MCF 10A (cell line): ENCODE measurements at regions of chr6 and their contacts with region 1.

Region 1: DNA sequence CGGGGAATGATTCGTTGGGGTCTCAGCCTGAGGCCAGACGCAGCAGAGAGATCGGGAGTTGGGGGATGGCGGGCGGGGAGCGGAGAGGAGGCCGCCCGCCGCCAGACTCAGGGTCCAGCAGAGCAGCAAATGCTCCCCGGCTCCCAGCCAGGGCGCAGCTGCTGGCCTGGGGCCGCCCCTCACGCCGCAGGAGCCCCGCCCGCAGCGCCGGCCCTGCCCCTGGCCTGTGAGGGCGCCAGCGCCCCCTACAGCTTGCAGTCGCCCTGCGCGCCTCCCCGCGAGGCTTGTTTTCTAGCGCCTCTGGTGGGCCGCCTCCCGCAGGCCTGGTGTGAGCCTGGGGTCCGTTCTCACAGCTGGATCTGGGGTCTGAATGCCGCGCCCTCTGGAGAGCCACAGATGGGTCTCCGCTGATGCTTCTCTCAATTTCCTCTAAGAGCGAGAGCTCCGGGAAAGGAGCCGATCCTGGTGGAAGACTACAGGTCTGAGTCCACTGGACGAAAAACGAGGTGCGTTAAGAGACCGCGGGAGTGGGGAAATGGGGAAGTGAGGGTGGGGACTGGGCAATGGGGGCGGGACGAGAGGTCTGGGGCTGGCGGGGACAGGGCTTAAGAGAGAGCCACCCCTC is 29.9 kb downstream of the TRIM38 start:
- DNase-seq: peak; percentile 93
- H3K4me3 Mint-ChIP-seq: peak overlapping the region; percentile 86
- H3K27ac Mint-ChIP-seq: peak overlapping the region; percentile 96
- H3K4me1 Mint-ChIP-seq: peaks cover 7% of the 10 kb centered on the region
- H3K27me3 Mint-ChIP-seq: no peaks in the 10 kb centered on the region
- CTCF ChIP-seq: peak; percentile 94

Region 2: GRCh38 chr6:25874822-25875562 is 117.5 kb before region 1 on chr6:
- CTCF ChIA-PET with region 1: no interaction called
- POLR2A ChIA-PET with region 1: no interaction called
- intact Hi-C with region 1: no loop called
- DNase-seq: peak; percentile 27
- H3K4me3 Mint-ChIP-seq: no peak overlapping the region
- H3K27ac Mint-ChIP-seq: no peak overlapping the region
- H3K4me1 Mint-ChIP-seq: no peaks in the 10 kb centered on the region
- H3K27me3 Mint-ChIP-seq: no peaks in the 10 kb centered on the region
- CTCF ChIP-seq: no peak

Region 3: DNA sequence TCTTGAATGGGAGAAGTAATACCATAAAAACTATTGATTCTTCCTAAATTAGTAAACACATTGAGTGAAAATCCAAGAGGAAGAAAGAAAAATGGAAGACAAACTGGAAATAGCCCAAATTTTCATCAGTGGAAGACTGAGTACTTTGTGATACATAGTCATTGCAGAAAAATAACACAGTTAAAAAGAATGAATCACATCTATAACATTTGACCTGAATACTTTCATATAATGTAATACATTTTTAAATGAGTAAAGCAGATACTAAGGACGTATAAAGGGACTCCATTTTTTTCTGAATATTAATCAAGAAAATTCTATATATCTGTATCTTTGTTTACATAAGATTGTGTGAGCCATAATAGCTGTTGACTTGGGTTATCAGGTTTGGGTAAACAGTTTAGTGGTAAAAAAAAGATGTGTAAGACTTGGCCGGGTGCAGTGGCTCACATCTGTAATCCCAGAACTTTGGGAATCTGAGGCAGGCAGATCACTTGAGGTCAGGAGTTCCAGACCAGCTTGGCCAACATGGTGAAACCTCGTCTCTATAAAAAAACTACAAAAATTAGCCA is 57.7 kb before region 1 on chr6:
- CTCF ChIA-PET with region 1: no interaction called
- POLR2A ChIA-PET with region 1: no interaction called
- intact Hi-C with region 1: no loop called
- DNase-seq: no peak
- H3K4me3 Mint-ChIP-seq: no peak overlapping the region
- H3K27ac Mint-ChIP-seq: no peak overlapping the region
- H3K4me1 Mint-ChIP-seq: no peaks in the 10 kb centered on the region
- H3K27me3 Mint-ChIP-seq: no peaks in the 10 kb centered on the region
- CTCF ChIP-seq: no peak

Region 4: DNA sequence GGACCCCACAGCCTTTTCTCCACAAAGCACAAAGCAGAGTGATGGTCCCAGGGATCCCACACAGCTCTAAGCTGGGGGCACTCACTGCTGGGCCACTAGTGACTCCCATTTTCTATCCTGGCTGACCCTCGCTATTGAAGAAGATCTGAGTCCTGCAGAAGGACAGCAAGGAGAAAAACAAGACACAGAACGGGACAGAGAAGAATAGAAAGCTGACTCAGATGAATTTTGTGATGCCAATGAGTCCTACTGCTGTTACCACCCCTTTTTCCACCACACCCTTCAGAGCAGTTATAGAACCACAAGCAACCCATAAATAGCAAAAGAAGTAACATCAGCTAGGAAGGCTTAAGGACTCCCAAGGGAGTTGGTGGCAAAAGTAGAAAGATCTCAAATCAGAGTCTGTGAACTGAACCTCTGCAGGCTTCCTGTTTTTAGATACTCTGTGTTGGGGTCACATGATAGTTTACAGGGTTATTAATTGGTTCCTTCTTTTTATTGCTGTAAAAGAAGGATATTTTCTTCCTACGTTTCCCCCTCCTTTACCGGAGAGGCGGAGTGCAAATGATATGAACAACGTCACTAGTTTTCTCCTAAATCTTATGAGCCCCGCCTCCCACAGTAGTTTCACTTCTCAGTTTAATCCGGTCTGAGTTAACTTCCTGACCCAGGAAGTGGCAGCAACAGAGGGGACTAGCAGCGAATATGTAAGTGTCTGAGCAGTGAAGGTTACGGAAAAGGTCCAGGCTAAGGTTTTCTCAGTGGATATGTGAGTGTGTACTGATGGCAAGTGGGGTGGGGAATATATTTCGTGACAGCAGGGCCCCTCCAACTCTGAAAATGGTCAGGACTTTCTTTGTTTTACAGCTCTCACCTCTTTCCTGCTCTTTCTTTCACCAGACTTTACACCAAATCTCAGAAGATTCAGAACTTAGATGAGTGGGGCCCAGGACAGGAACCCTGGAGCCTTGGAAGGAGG is 30.1 kb before region 1 on chr6 and contains the start of gene TRIM38:
- CTCF ChIA-PET with region 1: interaction called, 19 read pairs
- POLR2A ChIA-PET with region 1: interaction called, 50 read pairs
- intact Hi-C with region 1: no loop called
- DNase-seq: peak; percentile 90
- H3K4me3 Mint-ChIP-seq: peak within 1 kb of the TSS; percentile 83
- H3K27ac Mint-ChIP-seq: peak within 1 kb of the TSS; percentile 98
- H3K4me1 Mint-ChIP-seq: peaks cover 47% of the 10 kb centered on the region
- H3K27me3 Mint-ChIP-seq: no peaks in the 10 kb centered on the region
- CTCF ChIP-seq: no peak
- total RNA-seq, gene TRIM38: 5.4 and 6.7 TPM in 2 replicates

Region 5: DNA sequence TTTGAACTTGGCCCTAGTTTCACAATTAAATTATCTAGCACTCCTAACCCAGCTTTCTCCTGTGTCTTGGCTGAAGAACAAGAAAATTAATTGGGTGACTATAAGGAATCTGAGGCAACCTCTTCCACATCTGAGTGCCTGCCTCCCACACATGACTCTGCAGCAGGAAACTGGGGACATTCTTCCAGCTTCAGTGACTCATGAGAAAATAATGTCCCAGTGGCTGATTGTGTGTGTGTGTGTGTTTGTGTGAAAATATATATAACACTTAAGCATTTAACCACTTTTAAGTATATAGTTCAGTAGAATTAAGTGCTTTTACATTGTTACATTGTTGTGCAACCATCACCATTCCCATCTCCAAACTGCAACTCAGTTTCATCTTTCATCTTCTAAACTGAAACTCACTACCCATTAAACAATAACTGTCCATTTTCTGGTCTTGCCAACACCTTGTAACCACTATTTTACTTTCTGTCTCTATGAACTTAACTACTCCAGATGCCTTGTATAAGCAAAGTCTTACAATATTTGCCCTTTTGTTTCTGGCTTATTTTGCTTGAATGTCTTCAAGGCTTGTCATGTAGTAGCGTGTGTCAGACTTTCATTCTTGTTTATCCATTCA is 21.2 kb before region 1 on chr6:
- CTCF ChIA-PET with region 1: interaction called, 19 read pairs
- POLR2A ChIA-PET with region 1: interaction called, 34 read pairs
- intact Hi-C with region 1: no loop called
- DNase-seq: peak; percentile 83
- H3K4me3 Mint-ChIP-seq: peak overlapping the region; percentile 24
- H3K27ac Mint-ChIP-seq: peak overlapping the region; percentile 77
- H3K4me1 Mint-ChIP-seq: peaks cover 38% of the 10 kb centered on the region
- H3K27me3 Mint-ChIP-seq: no peaks in the 10 kb centered on the region
- CTCF ChIP-seq: no peak

Region 6: DNA sequence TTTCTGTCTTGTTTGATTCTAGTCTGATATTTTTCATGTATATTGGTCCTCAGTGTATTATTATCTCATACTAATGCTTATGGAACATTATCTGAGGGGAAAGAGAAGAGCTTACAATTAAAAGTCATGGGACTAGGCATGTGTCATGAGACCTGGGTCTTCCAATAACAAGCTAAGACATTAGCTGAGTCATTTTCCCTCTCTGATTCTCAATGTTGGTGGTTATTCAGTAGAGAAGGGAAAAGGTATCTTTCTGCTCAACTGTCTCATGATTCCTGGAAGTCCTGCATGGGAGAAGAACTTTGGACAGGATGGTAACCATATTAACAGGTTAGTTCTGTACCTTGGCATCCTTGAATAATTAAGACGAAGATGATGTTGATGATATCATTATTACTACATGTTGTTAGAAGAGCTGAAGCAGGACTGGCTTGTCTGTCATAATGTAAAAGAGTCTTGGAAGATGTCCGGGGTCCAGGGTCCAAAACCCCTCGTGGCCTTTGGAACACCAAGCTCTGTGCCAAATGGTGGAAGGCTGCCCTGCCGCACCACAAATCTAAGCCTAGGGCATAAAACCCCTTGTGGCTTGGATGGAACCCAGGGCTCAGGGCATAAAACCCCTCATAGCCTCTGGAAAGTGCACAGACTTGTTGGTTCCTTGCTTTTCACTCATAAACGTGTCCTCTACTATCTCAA is 10.8 kb before region 1 on chr6:
- CTCF ChIA-PET with region 1: interaction called, 22 read pairs
- POLR2A ChIA-PET with region 1: interaction called, 15 read pairs
- intact Hi-C with region 1: no loop called
- DNase-seq: no peak
- H3K4me3 Mint-ChIP-seq: no peak overlapping the region
- H3K27ac Mint-ChIP-seq: no peak overlapping the region
- H3K4me1 Mint-ChIP-seq: no peaks in the 10 kb centered on the region
- H3K27me3 Mint-ChIP-seq: no peaks in the 10 kb centered on the region
- CTCF ChIP-seq: no peak

Region 7: DNA sequence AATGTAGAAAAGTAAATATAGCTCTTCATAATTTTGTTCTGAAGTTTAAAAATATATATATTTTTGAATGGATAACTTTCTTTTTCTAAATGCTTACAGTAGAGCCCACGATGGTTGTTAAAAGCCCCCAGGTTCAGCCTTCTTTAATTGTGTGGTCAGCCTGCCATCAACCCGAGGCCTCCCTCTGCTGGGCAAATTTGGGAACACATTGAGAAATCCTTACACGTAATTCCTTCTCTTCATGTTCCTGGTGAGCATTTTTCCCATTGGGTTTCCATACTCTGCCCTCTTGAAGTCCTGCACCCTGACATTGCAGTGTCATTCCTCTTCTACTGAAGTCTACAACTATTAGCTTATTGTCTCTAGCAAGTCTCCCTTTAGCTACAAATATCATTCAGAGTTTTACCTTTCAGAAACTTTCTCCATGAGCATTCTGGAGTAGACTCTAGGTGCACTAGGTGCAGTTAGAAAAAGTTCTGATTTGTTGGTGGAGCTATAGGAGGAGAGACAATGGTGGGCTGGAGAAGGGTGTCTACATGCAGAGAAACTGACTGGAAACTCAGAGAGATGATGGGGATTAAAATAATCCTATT is 10.7 kb after region 1 on chr6:
- CTCF ChIA-PET with region 1: interaction called, 52 read pairs
- POLR2A ChIA-PET with region 1: interaction called, 36 read pairs
- intact Hi-C with region 1: no loop called
- DNase-seq: peak; percentile 64
- H3K4me3 Mint-ChIP-seq: no peak overlapping the region
- H3K27ac Mint-ChIP-seq: no peak overlapping the region
- H3K4me1 Mint-ChIP-seq: peaks cover under 1% of the 10 kb centered on the region
- H3K27me3 Mint-ChIP-seq: no peaks in the 10 kb centered on the region
- CTCF ChIP-seq: peak; percentile 63

Region 8: DNA sequence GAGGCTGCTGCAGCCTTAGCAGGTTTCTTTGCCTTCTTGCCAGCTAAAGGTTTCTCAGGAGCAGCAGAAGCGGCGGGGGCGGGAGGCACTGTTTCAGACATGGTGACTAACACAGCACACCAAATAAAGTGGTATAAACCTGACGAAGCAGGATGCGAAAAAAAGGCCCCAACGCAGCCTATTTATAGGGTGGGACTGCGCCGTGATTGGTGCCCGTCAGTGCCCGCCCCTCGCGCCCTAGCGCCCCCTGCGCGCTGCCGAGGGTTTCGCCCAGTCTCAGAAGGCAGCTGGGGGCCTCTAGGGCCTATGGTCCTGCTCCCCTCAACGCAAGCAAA is 25.1 kb after region 1 on chr6:
- CTCF ChIA-PET with region 1: interaction called, 32 read pairs
- POLR2A ChIA-PET with region 1: interaction called, 147 read pairs
- intact Hi-C with region 1: loop called (anchors 2 kb)
- DNase-seq: peak; percentile 93
- H3K4me3 Mint-ChIP-seq: peak overlapping the region; percentile 75
- H3K27ac Mint-ChIP-seq: peak overlapping the region; percentile 73
- H3K4me1 Mint-ChIP-seq: no peaks in the 10 kb centered on the region
- H3K27me3 Mint-ChIP-seq: no peaks in the 10 kb centered on the region
- CTCF ChIP-seq: peak; percentile 26